ENCODE measurements at regions of chr9 and their contacts with region 1.

Region 1: DNA sequence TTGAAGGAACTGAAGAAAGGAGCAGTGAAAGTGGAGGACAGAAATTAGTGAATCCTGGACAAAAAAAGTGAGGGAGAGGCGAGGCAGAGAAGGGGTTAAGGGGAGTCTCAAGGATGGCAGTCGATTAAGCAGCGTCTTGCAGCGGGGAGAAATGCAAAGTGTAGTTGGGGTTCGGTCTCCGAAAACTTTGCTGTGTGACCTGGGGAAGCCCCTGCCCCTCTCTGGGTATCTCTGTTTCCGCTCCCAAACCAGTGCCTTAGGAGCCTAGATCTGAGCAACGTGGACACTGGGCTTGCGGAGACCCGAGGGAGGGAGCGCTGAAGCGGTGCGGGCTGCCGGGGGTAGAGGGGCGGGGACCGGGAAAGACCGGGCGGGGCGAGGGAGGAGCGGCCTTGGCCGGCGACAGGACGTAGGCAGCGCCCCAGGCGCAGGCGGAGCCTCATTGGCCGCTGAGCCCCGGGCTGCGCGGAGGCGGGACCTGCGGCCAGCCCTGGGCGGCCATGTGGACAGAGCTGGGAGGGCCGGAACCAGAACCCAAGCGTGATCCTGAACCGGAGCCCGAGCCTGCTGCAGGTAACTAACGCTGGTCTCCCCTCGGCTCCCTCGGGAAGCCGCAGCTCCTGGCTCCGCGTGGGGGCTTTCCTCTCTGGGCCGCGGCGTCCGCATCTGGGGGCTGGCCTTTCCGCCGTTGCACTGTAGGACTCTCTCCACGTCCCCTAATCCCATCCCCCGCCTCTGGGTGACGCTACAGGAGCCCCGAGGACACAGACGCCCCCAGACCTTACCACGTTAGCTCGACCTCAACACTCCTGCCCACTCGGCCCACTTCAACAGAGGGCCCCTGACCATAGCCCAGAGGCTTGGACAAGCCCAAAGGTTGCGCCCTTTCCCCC is at the start of gene ALDH1B1:
- DNase-seq: peak; percentile 77
- ATAC-seq: peak; percentile 98
- H3K4me3 ChIP-seq: peak within 1 kb of the TSS; percentile 65 to 88 (median 77)
- H3K27ac ChIP-seq: peak within 1 kb of the TSS; percentile 79
- H3K4me1 ChIP-seq: peaks cover 69% of the 10 kb centered on the region
- H3K27me3 ChIP-seq: no peaks in the 10 kb centered on the region; a peak in 1 of 5 replicates
- CTCF ChIP-seq: peak; percentile 67
- EP300 ChIP-seq: no peak
- POLR2A ChIP-seq: peak; percentile 90
- RAD21 ChIP-seq: no peak
- total RNA-seq, gene ALDH1B1: 125 and 159 TPM in 2 replicates

Region 2: GRCh38 chr9:38380872-38381534 is 11.5 kb before region 1 on chr9:
- CTCF ChIA-PET with region 1: no interaction called
- POLR2A ChIA-PET with region 1: interaction called, 16 read pairs
- in situ Hi-C with region 1: no loop called
- intact Hi-C with region 1: no loop called
- DNase-seq: peak; percentile 98
- ATAC-seq: peak; percentile 92
- H3K4me3 ChIP-seq: peak overlapping the region in 2 of 3 experiments; percentile 31 to 51; a peak in 2 of 6 replicates
- H3K27ac ChIP-seq: peak overlapping the region; percentile 96
- H3K4me1 ChIP-seq: peaks cover 92% of the 10 kb centered on the region
- H3K27me3 ChIP-seq: no peaks in the 10 kb centered on the region
- CTCF ChIP-seq: no peak
- EP300 ChIP-seq: peak; percentile 60 to 94; a peak in 3 of 4 replicates
- POLR2A ChIP-seq: peak in 1 of 2 experiments; percentile 49; a peak in 2 of 4 replicates
- RAD21 ChIP-seq: no peak